Lower lobe of right lung (tissue), 2 donors: ENCODE measurements at regions of chr12 and their contacts with region 1.

Region 1: DNA sequence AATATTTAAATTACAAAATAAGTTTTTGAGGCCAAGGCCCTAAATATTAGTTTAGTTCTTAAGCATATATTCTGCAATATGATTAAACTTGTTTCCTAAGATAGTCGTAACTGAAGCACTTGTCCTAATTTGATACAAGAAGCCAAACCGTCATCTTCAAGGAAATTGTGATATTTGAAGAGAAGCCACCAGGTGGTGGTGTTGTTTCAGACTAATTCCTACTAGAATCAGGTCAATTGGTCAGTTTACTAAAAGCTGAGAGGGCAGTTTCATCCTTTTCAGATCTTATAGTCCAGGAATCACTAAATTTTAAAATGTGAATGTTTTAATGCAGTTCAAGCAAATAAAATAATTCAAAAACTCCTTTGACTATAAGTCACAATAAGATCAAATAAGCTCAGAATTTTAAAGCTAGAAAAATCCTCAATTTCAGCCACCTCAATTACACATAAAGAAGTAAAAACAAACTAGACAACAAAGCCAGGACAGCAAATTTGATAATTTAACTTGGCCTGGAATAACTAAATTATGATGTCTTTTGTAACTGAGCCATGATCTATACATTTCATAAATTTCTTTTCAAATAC is 7.1 kb upstream of the ARL1 start:
- DNase-seq: no peak
- ATAC-seq: peak; percentile 48 to 67
- H3K4me3 ChIP-seq: no peak overlapping the region
- H3K27ac ChIP-seq: no peak overlapping the region
- H3K4me1 ChIP-seq: no peaks in the 10 kb centered on the region
- H3K27me3 ChIP-seq: no peaks in the 10 kb centered on the region
- CTCF ChIP-seq: peak; percentile 65

Region 2: DNA sequence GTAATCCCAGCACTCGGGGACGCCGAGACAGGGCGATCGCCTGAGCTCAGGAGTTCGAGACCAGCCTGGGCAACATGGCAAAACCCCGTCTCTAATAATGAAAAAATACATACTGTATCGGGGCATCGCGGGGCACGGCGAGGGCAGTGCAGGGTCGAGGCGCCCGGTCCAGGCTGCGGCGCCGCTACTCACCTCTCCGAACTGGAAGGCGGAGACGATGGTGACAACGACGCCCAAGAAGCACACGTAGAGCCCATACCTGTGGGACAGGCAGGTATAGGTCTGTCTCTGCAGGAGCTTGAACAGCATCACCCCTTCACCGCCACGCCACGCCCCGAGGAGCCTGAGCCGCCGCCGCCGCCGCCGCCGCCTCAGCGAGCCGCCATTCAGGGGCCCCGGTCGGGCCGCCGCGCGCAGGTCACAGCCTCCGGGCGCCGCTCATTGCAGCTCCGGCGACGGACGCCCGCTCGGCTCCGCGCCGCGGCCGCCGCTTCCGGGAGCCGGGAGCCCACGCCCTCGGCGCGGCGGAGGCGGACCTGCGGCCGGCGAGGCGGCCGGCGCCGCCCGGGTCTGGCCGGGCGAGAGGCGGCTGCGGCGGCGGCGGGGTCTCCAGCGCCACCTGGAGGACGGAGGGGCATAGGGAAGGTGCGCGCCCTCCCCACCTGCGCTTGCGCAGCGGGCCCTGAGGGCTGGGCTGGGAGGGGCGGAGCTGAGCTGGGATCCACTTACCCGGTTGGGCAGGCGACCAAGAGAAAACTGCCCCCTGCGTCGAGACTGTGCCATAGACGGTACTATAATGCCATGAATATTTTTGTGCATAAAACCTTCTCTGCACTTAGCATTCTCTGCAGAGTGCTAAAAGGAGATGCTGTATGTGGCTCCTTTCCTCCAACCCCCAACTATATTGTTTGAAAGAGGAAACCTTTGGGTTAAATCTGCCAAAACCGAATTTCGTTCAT is 416.0 kb after region 1 on chr12 and contains the start of gene GNPTAB:
- intact Hi-C with region 1: loop called (anchors 10 kb)
- DNase-seq: peak; percentile 96
- ATAC-seq: peak; percentile 95 to 100
- H3K4me3 ChIP-seq: peak within 1 kb of the TSS; percentile 77
- H3K27ac ChIP-seq: peak within 1 kb of the TSS; percentile 86
- H3K4me1 ChIP-seq: peaks cover 45% of the 10 kb centered on the region
- H3K27me3 ChIP-seq: no peaks in the 10 kb centered on the region
- CTCF ChIP-seq: peak; percentile 75
- total RNA-seq, gene GNPTAB: 59.2 TPM